AG04450 (cell line): ENCODE measurements at regions of chr2 and their contacts with region 1.

Region 1: DNA sequence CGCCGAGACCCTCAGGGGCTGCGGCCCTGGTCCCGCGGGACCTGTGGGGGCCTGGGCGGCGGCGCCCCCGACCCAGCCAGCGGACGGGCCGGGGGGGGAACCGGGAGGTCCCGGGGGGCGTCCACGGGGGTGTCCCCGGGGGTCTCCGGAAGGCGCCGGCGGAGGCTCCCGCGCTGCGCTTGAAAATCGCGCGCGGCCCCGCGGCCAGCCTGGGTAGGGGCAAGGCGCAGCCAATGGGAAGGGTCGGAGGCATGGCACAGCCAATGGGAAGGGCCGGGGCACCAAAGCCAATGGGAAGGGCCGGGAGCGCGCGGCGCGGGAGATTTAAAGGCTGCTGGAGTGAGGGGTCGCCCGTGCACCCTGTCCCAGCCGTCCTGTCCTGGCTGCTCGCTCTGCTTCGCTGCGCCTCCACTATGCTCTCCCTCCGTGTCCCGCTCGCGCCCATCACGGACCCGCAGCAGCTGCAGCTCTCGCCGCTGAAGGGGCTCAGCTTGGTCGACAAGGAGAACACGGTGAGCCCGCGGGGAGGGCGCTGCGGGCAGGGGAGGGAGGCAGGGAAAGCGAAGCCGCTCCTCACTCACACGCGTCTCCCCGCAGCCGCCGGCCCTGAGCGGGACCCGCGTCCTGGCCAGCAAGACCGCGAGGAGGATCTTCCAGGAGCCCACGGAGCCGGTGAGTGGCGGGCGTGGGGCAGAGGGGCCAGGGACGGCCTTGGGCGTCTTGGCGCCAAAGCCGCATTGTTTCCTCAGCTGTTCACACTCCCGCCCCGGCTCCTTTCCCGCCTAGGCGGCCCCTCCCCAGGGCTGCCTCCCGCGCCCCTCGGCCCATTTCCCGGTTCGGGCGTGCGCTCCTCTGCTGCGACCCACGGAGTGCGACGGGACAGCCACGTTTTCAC is at the start of gene RRM2:
- DNase-seq: peak; percentile 51
- H3K4me3 ChIP-seq: peak within 1 kb of the TSS; percentile 79
- H3K27ac ChIP-seq: peak within 1 kb of the TSS; percentile 47
- H3K27me3 ChIP-seq: no peaks in the 10 kb centered on the region
- CTCF ChIP-seq: no peak
- polyA plus RNA-seq, gene RRM2: 13.7 and 21.7 TPM in 2 replicates

Region 2: DNA sequence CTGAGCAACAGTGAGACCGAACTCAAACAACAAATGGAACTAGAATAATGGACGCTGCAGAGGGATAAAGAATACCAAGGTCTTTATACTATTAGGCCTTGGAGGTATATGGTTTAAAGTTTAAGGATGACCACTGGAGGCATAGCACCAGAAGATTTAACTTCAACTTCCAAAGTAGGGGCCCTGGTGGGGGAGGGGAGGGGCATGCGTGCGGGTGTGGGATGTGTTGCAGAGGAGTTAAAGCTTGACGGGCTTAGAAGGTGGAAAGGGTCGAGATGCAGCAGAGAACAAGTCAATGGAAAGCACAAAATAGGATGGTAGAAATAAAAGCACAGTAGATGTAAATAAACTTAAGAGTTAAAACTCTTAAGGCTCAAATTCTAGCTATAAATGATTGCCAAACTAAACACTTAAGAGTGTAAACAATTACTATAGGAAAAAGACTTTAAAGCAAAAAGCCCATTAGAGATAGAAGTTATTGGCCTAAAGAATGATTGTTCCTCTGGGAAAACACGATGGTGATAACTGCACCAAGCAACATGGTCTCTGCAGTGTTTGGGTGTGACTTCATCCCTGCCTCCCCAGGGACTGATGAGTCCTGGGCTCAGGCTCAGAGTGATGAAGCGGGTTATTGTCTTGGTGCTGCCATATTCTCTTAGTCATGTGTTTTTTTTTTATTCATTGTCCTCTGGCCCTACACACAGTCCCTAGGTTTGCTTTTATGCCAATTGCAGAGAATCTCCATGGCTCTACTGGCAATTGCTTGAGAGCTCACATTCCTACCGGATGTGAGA is 12.9 kb after region 1 on chr2:
- CTCF ChIA-PET with region 1: interaction called, 16 read pairs
- POLR2A ChIA-PET with region 1: interaction called, 3 read pairs
- DNase-seq: no peak
- H3K4me3 ChIP-seq: no peak overlapping the region
- H3K27ac ChIP-seq: no peak overlapping the region
- H3K27me3 ChIP-seq: no peaks in the 10 kb centered on the region
- CTCF ChIP-seq: no peak

Region 3: GRCh38 chr2:10382354-10383061 is 259.9 kb after region 1 on chr2:
- CTCF ChIA-PET with region 1: interaction called, 10 read pairs
- POLR2A ChIA-PET with region 1: interaction called, 3 read pairs
- DNase-seq: no peak
- H3K4me3 ChIP-seq: no peak overlapping the region
- H3K27ac ChIP-seq: no peak overlapping the region
- H3K27me3 ChIP-seq: no peaks in the 10 kb centered on the region
- CTCF ChIP-seq: no peak